BJ (cell line): ENCODE measurements at regions of chr5 and their contacts with region 1.

Region 1: DNA sequence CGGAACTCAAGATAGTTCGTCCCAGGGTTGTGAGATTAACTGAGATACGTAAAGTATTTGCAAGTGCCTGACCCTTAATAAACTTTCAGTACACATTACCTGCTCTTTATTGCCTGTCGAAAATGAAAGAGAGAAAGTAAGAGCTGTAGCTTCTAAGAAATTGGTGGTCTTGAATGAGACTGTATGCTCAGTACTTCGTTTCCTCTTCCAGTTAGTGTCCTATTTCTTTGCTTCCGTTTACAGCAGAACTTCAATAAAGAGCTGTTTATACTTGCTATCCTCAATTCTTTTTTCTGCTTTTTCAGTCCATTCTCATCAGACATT is 534 bp downstream of the SRFBP1 start:
- DNase-seq: no peak
- H3K4me3 ChIP-seq: peak overlapping the region; percentile 94
- H3K27me3 ChIP-seq: no peaks in the 10 kb centered on the region
- CTCF ChIP-seq: no peak

Region 2: DNA sequence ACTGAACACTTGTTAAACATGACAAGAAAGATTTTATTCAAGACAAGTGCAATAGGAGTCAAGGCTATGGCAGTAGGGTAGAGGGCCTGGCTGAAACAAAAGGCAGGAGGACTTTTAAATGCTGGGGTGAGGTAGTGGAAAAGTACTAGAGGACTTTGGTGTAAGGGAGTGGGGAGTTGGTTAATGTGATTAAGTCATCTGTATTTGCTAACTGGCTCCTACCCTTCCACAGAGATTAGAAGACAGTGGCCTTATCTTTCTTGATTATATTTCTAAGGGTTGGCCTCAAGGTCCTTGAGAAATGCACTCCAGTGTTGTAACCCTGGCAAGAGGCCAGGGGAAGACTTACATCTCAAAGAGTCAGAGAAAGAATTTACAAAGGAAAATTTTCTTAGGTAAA is 270.8 kb before region 1 on chr5:
- CTCF ChIA-PET with region 1: no interaction called
- POLR2A ChIA-PET with region 1: no interaction called
- DNase-seq: no peak
- H3K4me3 ChIP-seq: no peak overlapping the region
- H3K27me3 ChIP-seq: no peaks in the 10 kb centered on the region
- CTCF ChIP-seq: no peak

Region 3: DNA sequence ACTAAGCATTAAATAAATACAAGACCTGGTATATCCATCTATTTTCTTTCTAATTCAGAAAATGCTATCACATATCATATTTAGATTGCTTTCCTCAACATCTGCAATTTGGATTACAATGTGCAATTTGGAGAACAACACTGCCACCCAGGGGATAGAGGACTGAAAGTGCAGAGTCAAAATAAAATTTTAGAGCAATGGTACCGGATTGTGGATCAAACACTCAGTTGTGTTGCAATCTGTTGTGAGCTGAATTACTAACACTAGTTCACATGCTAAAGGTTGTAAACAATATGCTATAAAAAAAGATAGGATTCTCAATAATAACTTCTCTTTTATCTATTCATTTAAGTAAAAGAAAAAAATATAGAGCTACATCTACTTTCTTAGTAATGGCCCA is 12.4 kb before region 1 on chr5:
- CTCF ChIA-PET with region 1: interaction called, 28 read pairs
- POLR2A ChIA-PET with region 1: no interaction called
- DNase-seq: no peak
- H3K4me3 ChIP-seq: no peak overlapping the region
- H3K27me3 ChIP-seq: no peaks in the 10 kb centered on the region
- CTCF ChIP-seq: peak; percentile 68

Region 4: GRCh38 chr5:121987685-121988073 is 25.4 kb after region 1 on chr5:
- CTCF ChIA-PET with region 1: no interaction called
- POLR2A ChIA-PET with region 1: no interaction called
- DNase-seq: no peak
- H3K4me3 ChIP-seq: no peak overlapping the region
- H3K27me3 ChIP-seq: no peaks in the 10 kb centered on the region
- CTCF ChIP-seq: no peak